A673 (cell line): ENCODE measurements at regions of chr20 and their contacts with region 1.

Region 1: DNA sequence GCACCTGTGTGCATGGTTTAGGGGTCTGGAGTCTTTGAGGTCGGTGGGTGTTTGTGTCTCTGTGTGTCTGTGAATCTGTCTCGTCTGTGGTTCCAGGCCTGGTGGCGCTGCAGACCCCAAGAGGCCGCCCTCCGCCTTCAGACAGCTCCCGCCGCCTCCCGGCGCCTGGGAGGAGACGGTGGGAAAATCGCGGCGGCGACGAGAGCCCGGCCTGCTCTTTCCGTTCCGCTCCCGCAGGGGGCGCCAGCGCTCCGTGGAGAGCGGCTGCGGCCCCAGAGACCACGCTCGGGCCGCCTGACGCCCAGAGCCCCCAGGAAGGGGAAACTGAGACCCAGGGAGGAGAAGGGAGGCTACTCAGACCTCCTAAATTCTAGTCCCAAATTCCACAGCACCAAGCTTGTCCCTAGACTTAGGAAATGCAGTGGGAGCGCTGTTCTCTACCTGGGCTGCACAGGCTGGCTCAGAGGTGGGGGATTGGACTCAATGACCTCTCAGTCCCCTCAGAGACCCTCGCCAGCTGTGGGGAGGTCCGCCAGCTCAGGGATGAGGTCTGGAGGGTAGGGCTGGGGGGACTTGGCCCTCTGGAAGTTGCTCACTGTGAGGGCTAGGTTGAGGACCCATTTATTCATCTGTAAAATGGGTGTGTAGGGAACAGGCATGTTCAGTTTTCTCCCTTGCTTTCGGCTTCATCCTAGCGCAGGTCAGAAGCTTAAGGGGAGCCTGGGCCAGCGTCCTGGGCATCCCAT is 36.9 kb upstream of the BLCAP start:
- DNase-seq: peak; percentile 68
- H3K4me3 ChIP-seq: no peak overlapping the region
- H3K27ac ChIP-seq: no peak overlapping the region
- H3K4me1 ChIP-seq: peaks cover 23% of the 10 kb centered on the region
- H3K27me3 ChIP-seq: no peaks in the 10 kb centered on the region
- CTCF ChIP-seq: peak; percentile 97

Region 2: DNA sequence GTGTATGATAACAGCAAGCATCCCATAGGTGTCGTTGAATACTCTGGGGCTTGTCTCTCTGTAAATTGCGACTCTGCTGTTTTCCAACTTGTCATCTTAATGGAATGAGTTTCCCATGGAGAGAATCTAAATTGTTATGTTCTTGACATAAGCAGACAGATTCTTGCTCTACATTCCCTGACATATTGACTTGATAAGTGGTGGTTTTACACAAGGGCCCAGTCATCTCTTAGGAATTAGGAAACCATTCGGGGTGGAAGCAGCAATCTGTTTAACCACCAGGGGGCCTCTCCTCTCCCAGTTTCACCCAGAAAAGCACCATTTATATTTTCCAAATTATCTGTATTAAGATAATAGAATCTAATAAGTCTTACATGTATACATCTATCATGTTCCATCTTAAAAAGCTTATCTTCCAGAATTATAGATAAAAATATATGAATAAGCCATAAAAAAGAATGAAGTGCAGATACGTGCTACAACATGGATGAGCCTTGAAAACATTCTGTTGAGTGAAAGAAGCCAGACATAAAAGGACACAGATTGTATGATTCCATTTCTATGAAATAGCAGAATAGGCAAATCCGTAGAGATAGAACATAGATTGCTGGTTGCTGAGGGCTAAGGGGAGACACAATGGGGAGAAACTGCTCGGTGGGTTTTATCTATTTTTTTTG is 362.2 kb before region 1 on chr20:
- CTCF ChIA-PET with region 1: no interaction called
- POLR2A ChIA-PET with region 1: no interaction called
- intact Hi-C with region 1: no loop called
- DNase-seq: peak; percentile 73
- H3K4me3 ChIP-seq: no peak overlapping the region
- H3K27ac ChIP-seq: no peak overlapping the region
- H3K4me1 ChIP-seq: peaks cover 8% of the 10 kb centered on the region
- H3K27me3 ChIP-seq: no peaks in the 10 kb centered on the region
- CTCF ChIP-seq: peak; percentile 90

Region 3: GRCh38 chr20:37541326-37541725 is 23.2 kb before region 1 on chr20:
- CTCF ChIA-PET with region 1: no interaction called
- POLR2A ChIA-PET with region 1: interaction called, 10 read pairs
- intact Hi-C with region 1: no loop called
- DNase-seq: no peak
- H3K4me3 ChIP-seq: no peak overlapping the region
- H3K27ac ChIP-seq: no peak overlapping the region
- H3K4me1 ChIP-seq: no peaks in the 10 kb centered on the region
- H3K27me3 ChIP-seq: no peaks in the 10 kb centered on the region
- CTCF ChIP-seq: no peak

Region 4: GRCh38 chr20:37901654-37902503 is 337.3 kb after region 1 on chr20:
- CTCF ChIA-PET with region 1: no interaction called
- POLR2A ChIA-PET with region 1: no interaction called
- intact Hi-C with region 1: loop called (anchors 5 kb)
- DNase-seq: peak; percentile 85
- H3K4me3 ChIP-seq: peak overlapping the region; percentile 64
- H3K27ac ChIP-seq: no peak overlapping the region
- H3K4me1 ChIP-seq: peaks cover 51% of the 10 kb centered on the region
- H3K27me3 ChIP-seq: no peaks in the 10 kb centered on the region
- CTCF ChIP-seq: peak; percentile 77

Region 5: DNA sequence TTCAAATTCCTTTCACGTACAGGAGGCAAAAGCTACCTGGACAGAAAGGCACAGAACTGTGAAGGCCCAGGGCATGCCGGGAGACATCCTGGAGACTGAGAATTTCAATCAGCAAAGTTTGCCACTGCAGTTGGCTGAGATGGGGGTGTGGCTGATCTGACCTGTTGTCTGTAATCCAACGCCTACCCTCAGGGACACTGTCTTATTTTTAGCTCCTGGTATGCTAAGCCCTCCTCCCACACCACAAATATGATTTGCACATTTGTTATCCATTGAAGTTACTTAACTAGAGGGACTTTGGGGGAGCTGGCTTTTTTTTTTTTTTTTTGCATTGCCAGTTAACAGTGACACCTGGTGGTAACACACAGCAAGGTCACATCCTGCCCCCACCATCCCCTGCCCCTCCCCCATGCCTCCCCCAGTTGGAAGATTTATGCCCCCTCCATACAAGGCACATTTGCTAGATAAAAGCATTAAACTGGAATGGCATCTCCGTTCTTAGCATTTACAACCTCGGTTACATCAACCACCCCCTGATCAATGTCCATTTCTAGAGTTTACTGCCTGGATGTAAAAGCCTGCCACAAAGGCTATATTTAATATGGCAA is 428.3 kb after region 1 on chr20:
- CTCF ChIA-PET with region 1: interaction called, 7 read pairs
- POLR2A ChIA-PET with region 1: no interaction called
- intact Hi-C with region 1: loop called (anchors 2 kb)
- DNase-seq: peak; percentile 69
- H3K4me3 ChIP-seq: no peak overlapping the region
- H3K27ac ChIP-seq: no peak overlapping the region
- H3K4me1 ChIP-seq: peaks cover 32% of the 10 kb centered on the region
- H3K27me3 ChIP-seq: no peaks in the 10 kb centered on the region
- CTCF ChIP-seq: peak; percentile 68

Region 6: DNA sequence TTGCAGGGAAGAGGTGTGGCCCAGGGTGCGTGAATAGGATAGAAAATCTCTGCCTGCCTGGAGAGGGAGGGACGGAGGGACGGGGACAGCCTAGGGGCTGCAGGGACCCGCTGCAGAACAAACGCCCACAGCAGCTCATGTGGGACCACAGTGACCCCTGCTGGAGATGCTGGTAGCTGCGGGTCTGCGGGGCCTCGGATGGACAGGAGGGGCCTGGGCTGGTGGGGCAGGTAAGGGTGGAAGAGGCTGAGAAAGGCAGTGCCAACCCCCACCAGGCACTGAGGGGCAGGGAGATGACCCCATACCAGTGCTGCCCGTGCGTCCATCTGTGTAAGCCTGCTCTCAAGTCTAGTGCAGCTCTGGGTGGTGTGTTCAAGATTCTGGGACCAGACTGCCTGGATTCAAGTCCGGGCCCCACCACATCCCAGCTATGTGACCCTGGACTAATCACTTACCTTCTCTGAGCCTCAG is 656.6 kb after region 1 on chr20:
- CTCF ChIA-PET with region 1: no interaction called
- POLR2A ChIA-PET with region 1: no interaction called
- intact Hi-C with region 1: loop called (anchors 2 kb)
- DNase-seq: peak; percentile 77
- H3K4me3 ChIP-seq: no peak overlapping the region
- H3K27ac ChIP-seq: no peak overlapping the region
- H3K4me1 ChIP-seq: no peaks in the 10 kb centered on the region
- H3K27me3 ChIP-seq: no peaks in the 10 kb centered on the region
- CTCF ChIP-seq: peak; percentile 93

Region 7: DNA sequence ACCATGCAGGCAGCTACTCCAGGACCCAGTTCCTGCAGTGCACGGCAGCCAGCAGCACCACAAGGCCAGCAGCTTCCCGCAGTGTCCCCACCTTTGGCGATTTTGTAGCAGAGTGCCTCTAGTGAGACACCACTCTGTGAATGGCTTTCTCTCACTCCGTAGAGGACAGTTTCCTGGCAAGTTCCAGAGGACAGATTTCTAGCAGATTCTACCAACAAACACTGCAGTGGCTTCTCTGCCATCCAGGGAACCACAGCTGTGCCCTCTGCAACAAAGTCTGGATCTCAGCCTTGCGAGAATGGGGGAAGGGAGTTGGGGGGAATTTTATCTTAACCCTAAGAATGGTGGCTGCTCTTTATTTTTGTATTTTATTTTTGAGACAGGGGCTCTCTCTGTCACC is 841.9 kb after region 1 on chr20:
- CTCF ChIA-PET with region 1: no interaction called
- POLR2A ChIA-PET with region 1: no interaction called
- intact Hi-C with region 1: loop called (anchors 10 kb)
- DNase-seq: no peak
- H3K4me3 ChIP-seq: no peak overlapping the region
- H3K27ac ChIP-seq: no peak overlapping the region
- H3K4me1 ChIP-seq: peaks cover 4% of the 10 kb centered on the region
- H3K27me3 ChIP-seq: no peaks in the 10 kb centered on the region
- CTCF ChIP-seq: no peak